ENCODE measurements at regions of chr9 and their contacts with region 1.

Region 1: DNA sequence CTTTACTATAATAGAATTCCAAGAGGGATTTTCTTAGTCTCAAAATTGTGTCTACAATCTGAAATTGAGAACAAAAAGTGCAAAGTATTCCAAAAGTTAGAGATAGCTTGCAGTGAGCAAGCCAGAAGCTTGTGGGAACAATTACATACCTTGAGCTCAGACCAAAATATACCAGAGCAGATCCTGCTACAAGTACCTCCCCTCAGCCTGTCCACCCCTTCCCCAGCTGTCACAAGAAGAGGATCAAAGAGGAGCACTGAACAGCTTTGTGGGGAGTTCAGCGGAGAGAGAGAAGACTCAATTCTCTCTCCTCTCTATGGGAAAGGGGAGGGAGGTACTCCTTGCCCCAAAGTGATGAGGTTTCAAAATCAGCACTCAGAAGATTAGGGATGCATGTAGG is 869.2 kb upstream of the DMAC1 start:
- DNase-seq: no peak
- ATAC-seq: no peak

Region 2: DNA sequence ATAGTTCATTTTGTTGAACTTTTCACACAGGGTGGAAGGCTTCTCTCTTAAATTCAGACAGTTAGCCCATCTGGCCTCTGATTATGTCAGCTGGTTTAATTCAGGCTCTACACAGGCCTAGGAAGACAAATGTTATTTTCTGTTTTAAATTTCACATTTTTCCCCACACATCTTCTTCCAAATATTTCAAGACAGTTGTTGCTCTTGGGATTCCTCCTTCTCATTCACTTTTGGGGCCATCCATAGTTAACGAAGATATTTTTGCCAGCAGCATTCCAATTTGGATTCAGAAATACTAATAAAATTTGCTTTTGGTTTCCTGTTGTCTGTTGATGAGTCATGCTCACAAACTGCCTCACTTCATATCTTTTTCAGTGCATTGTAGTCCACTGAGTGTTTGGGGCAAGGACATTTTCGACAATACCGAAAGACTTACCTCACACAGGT is 1344.6 kb before region 1 on chr9:
- intact Hi-C with region 1: no loop called
- DNase-seq: no peak
- ATAC-seq: no peak

Region 3: GRCh38 chr9:8514760-8515159 is 154.0 kb before region 1 on chr9:
- intact Hi-C with region 1: no loop called
- DNase-seq: no peak
- ATAC-seq: no peak

Region 4: DNA sequence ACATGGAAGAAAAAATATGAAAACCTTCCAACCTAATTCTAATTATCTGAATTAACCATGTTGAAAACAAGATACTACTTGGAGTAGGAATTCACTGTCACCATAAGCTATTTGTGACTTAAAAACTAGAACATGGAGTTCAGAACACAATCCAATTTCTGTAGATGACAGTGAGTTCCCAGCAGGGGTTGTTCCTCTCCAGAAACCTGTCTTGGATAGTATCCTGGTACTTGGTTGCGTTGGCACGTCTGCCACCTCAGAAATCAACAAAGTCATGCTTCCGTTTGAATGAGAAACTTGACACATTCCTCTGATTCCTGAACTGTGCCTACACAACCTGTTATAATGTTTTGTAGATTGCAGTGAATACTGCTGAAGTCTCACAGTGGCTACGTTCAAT is 79.3 kb before region 1 on chr9:
- intact Hi-C with region 1: no loop called
- DNase-seq: no peak
- ATAC-seq: no peak

Region 5: GRCh38 chr9:10523164-10523563 is 1854.4 kb after region 1 on chr9:
- intact Hi-C with region 1: loop called (anchors 5 kb)
- DNase-seq: no peak
- ATAC-seq: no peak